ENCODE measurements at regions of chr7 and their contacts with region 1.

Region 1: GRCh38 chr7:21507626-21508343 is 35.1 kb upstream of the DNAH11 start:
- DNase-seq: peak in 1 of 2 experiments; percentile 34
- H3K4me3 ChIP-seq: no peak overlapping the region
- H3K27ac ChIP-seq: no peak overlapping the region
- H3K4me1 ChIP-seq: peaks cover 10% of the 10 kb centered on the region
- H3K27me3 ChIP-seq: no peaks in the 10 kb centered on the region
- CTCF ChIP-seq: peak; percentile 89

Region 2: DNA sequence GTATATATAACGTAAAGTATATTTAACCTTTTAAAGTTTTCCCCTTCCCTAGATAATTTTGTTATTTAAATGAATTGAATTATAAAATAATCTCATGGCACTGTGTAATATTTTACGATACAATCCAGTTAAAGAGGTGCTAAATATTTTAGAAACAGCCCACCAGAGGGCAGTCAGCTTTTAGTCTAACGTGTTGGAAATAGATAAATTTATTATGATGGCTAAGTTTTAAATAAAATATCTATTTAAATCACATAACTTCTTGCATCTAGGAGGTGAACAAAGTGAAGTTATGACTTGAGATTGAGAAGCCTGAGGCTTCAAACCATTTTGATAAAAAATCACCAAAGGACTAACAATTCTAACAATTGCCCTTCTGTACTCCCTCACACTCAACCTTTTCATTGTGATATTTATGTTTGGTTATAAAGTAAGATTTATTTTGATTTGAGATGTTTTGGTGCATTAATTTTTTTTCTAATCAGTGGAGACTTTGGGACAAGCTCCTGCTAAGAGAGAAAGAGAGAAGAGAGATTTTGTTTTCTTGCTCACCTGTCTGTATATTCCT is 251.4 kb before region 1 on chr7:
- CTCF ChIA-PET with region 1: no interaction called
- POLR2A ChIA-PET with region 1: no interaction called
- intact Hi-C with region 1: loop called (anchors 1 kb)
- DNase-seq: peak in 1 of 2 experiments; percentile 43
- H3K4me3 ChIP-seq: no peak overlapping the region
- H3K27ac ChIP-seq: no peak overlapping the region
- H3K4me1 ChIP-seq: no peaks in the 10 kb centered on the region
- H3K27me3 ChIP-seq: no peaks in the 10 kb centered on the region
- CTCF ChIP-seq: peak; percentile 92

Region 3: GRCh38 chr7:21365866-21366624 is 141.7 kb before region 1 on chr7:
- CTCF ChIA-PET with region 1: no interaction called
- POLR2A ChIA-PET with region 1: no interaction called
- intact Hi-C with region 1: loop called (anchors 10 kb)
- DNase-seq: peak; percentile 20 to 99
- H3K4me3 ChIP-seq: no peak overlapping the region
- H3K27ac ChIP-seq: peak overlapping the region; percentile 45
- H3K4me1 ChIP-seq: peaks cover 23% of the 10 kb centered on the region
- H3K27me3 ChIP-seq: no peaks in the 10 kb centered on the region
- CTCF ChIP-seq: no peak

Measured in PC-9 (cell line).